Activated CD4-positive, alpha-beta memory T cell treated with anti-CD3 and anti-CD28 coated beads for 36 hours (primary cell): ENCODE measurements at regions of chr7 and their contacts with region 1.

Region 1: DNA sequence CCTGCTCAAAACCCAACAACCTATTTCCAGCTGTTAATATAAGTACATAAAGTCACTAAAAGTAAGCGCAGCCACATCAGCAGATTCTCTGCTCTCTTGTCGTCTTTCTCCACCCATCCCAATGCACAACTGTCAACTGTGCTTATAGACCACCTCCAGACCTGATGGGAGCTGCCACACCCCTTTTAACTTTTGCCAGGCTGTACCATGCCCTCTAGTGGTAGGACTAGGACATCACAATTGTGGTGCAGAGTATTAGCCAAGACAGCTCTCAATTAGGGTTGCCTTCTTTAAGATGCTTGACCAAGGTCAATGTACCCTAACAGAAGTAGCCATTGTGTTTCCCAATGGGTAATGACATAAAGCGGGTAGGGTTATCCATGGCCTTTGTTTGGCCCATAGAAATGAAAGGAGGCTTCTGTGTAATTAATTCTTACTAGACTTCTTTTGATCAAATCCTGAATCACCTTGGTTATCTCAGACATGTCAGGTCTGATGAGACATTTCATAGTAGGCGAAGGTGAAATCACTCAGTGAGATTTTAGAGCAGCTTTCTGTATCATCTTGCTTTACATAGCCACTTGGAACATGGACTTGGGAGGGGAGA is 68.1 kb downstream of the SCRN1 start:
- DNase-seq: peak; percentile 50
- H3K4me3 Mint-ChIP-seq: no peak overlapping the region
- H3K27ac Mint-ChIP-seq: no peak overlapping the region
- H3K4me1 Mint-ChIP-seq: peaks cover 5% of the 10 kb centered on the region
- H3K27me3 Mint-ChIP-seq: peaks cover 11% of the 10 kb centered on the region

Region 2: DNA sequence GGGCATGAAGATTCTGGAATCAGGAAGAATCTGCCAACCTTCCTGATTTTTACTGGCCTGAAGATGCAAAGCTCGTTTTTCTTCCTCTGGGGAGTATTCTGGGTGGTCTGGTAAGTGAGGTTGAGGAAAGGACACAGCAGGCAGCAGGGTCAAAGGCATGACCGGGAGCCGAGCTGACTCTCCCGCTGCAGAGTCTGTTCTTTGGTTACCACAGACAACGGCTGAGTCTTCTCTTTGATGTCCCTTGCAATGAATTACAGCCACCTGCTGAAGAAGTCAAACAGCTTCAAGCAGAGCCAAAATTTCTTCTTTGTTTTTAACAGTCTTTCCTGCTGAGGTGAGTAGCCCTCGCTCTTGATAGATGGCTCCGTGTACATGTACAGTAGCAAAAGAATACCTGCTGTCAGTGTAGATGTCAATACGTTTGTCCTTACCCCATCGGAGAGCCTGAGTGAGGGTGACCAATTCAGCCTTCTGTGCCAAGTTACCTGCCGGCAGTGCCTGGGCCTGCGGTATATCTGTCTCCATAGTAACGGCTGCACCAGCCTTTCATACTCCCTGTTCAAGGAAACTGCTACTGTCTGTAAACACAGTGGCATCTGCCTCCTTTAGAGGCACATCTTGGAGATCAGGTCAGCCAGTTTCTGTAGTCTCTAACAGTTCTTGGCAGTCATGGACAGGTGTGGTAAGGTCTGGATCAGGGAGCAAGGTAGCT is 281.5 kb before region 1 on chr7:
- CTCF ChIA-PET with region 1: interaction called, 22 read pairs
- POLR2A ChIA-PET with region 1: no interaction called
- intact Hi-C with region 1: loop called (anchors 1 kb)
- DNase-seq: no peak
- H3K4me3 Mint-ChIP-seq: no peak overlapping the region
- H3K27ac Mint-ChIP-seq: no peak overlapping the region
- H3K4me1 Mint-ChIP-seq: no peaks in the 10 kb centered on the region
- H3K27me3 Mint-ChIP-seq: no peaks in the 10 kb centered on the region

Region 3: DNA sequence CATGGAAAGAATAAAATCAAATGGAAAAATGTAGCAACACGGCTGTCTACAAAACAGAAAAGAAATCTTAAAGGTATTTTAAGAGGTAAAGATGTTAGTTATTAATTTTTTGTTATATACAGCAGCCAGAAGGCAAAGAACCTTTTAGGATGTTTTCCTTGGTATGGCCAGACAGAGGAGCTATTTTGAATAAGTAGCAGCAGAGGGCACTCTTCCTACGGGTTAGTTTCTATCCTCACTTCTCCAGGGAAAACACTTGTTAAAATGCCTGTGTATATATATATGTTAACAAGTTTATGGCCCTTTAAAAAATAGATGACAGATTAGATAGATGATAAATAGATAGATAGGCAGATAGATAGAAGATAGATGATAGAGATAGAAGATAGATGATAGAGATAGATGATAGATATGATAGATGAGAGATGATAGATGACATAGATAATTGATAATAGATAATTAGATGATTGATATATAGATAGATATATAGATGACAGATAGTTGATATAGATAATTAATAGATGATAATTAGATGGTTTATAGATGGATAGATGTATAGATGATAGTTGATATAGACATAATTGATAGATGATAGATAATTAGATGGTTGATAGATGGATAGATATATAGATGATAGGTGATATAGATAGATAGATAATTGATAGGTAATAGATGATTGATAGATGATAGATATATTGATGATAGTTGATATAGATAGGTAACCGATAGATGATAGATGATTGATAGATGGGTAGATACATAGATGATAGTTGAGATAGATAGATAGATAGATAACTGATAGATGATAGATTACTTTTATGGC is 173.0 kb before region 1 on chr7:
- CTCF ChIA-PET with region 1: interaction called, 8 read pairs
- POLR2A ChIA-PET with region 1: no interaction called
- intact Hi-C with region 1: loop called (anchors 1 kb)
- DNase-seq: no peak
- H3K4me3 Mint-ChIP-seq: no peak overlapping the region
- H3K27ac Mint-ChIP-seq: no peak overlapping the region
- H3K4me1 Mint-ChIP-seq: no peaks in the 10 kb centered on the region
- H3K27me3 Mint-ChIP-seq: no peaks in the 10 kb centered on the region

Region 4: GRCh38 chr7:29878081-29878688 is 43.3 kb before region 1 on chr7:
- CTCF ChIA-PET with region 1: interaction called, 23 read pairs
- POLR2A ChIA-PET with region 1: no interaction called
- intact Hi-C with region 1: no loop called
- DNase-seq: peak; percentile 16
- H3K4me3 Mint-ChIP-seq: no peak overlapping the region
- H3K27ac Mint-ChIP-seq: no peak overlapping the region
- H3K4me1 Mint-ChIP-seq: peaks cover 5% of the 10 kb centered on the region
- H3K27me3 Mint-ChIP-seq: peaks cover 11% of the 10 kb centered on the region

Region 5: DNA sequence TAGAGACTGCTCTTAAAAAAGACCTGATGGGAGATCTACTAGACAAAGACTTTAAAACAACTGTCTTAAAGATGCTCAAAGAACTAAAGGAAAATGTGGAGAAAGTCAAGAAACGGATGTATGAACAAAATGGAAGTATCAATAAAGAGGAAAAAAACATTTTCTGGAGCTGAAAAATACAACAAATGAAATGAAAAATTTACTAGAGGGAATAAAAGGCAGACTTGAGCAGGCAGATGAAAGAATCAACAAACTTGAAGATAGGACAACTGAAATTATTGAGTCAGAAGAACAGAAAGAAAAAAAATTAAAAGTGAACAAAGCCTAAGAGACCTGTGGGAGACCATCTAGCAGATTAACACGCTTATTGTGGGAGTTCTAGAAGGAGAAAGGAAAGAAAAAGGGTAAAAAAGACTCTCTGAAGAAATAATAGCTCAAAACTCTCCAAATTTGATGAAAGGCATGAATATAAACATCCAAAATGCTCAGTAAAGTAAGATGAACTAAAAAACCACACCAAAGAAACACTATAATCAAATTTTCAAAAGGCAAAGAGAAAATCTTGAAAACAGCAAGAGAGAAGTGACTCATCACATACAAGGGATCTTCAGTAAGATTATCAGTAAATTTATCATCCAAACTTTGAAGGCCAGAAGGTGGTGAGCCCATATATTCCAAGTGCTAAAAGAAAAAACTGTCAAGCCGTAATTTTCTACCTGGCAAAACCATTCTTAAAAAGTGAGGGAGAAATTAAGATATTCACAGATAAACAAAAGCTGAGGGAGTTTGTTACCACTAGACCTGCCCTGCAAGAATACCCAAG is 15.1 kb before region 1 on chr7:
- CTCF ChIA-PET with region 1: interaction called, 11 read pairs
- POLR2A ChIA-PET with region 1: no interaction called
- intact Hi-C with region 1: no loop called
- DNase-seq: no peak
- H3K4me3 Mint-ChIP-seq: no peak overlapping the region
- H3K27ac Mint-ChIP-seq: no peak overlapping the region
- H3K4me1 Mint-ChIP-seq: no peaks in the 10 kb centered on the region
- H3K27me3 Mint-ChIP-seq: peaks cover 11% of the 10 kb centered on the region

Region 6: GRCh38 chr7:29935111-29935510 is 13.6 kb after region 1 on chr7:
- CTCF ChIA-PET with region 1: interaction called, 43 read pairs
- POLR2A ChIA-PET with region 1: no interaction called
- intact Hi-C with region 1: no loop called
- DNase-seq: no peak
- H3K4me3 Mint-ChIP-seq: no peak overlapping the region
- H3K27ac Mint-ChIP-seq: no peak overlapping the region
- H3K4me1 Mint-ChIP-seq: no peaks in the 10 kb centered on the region
- H3K27me3 Mint-ChIP-seq: no peaks in the 10 kb centered on the region

Region 7: GRCh38 chr7:30062591-30062990 is 141.1 kb after region 1 on chr7:
- CTCF ChIA-PET with region 1: interaction called, 17 read pairs
- POLR2A ChIA-PET with region 1: no interaction called
- intact Hi-C with region 1: no loop called
- DNase-seq: no peak
- H3K4me3 Mint-ChIP-seq: no peak overlapping the region
- H3K27ac Mint-ChIP-seq: no peak overlapping the region
- H3K4me1 Mint-ChIP-seq: no peaks in the 10 kb centered on the region
- H3K27me3 Mint-ChIP-seq: no peaks in the 10 kb centered on the region